Posterior vena cava (tissue), 2 donors: ENCODE measurements at regions of chr2 and their contacts with region 1.

Region 1: GRCh38 chr2:96951093-96951654 is 35.2 kb downstream of the FAM178B start:
- DNase-seq: peak; percentile 86

Region 2: GRCh38 chr2:96485751-96486651 is 465.2 kb before region 1 on chr2:
- intact Hi-C with region 1: no loop called
- DNase-seq: peak; percentile 89

Region 3: GRCh38 chr2:96739633-96740428 is 211.3 kb before region 1 on chr2 and contains the start of gene LMAN2L:
- intact Hi-C with region 1: loop called in 1 of 2 experiments (anchors 10 kb)
- DNase-seq: peak; percentile 98
- total RNA-seq, gene LMAN2L: 9.0 to 14.5 TPM

Region 4: GRCh38 chr2:96856776-96857673 is 94.1 kb before region 1 on chr2:
- intact Hi-C with region 1: loop called (anchors 2 kb)
- DNase-seq: no peak

Region 5: GRCh38 chr2:96868555-96869280 is 82.5 kb before region 1 on chr2:
- intact Hi-C with region 1: loop called in 1 of 2 experiments (anchors 2 kb)
- DNase-seq: peak; percentile 97

Region 6: DNA sequence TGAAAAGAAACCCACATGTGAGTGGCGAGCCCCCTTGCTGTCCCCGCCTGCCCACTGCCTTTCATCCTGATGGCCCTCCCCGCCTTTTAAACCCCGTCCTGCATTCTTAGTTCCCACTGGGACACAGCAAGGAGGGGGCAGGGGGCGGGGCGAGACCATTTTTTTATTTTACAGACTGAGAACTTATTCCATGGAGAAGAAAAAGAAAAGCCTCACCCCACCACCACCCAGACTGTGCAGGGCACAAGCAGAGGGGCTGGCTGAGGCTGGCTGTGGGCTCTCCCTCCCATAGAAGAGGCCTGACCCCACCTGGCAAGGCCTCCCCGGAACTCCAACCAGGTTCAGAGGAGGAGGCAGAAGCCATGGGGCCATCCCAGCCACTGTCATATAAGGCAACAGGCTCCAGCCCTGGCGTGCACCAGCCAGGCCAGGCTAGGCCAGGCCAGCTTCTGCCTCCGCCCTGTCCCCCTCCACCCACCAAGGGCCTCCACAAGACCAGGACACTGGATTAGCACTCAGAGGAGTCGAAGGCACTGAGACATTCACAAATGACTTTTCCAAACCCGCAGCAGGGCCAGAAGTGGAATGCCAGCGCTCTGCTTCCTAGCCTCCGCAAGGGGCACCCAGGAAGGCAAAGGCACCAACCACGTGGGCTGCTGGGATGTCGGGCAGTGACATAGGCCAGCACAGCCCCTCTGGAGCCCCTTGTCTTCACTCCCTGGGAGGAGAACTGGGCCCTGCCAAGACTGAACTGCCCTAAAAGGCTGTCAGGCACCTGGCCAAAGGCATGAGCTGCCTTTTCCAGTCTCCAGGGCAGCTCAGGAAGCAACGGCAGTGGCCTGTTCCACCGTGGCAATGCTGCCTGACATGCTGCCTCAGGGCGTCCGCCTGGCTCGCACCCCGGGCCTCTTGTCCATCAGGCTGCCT is 43.8 kb before region 1 on chr2:
- intact Hi-C with region 1: loop called in 1 of 2 experiments (anchors 5 kb)
- DNase-seq: peak; percentile 94

Region 7: GRCh38 chr2:96962567-96963203 is 11.5 kb after region 1 on chr2:
- intact Hi-C with region 1: no loop called
- DNase-seq: peak; percentile 71